Dendritic cell treated with granulocyte-macrophage colony-stimulating factor and Interleukin-4, amounts not matched to agents 40 ng/mL and 50 ng/mL, for 4 days (primary cell): ENCODE measurements at regions of chr9 and their contacts with region 1.

Region 1: GRCh38 chr9:88578121-88579054 is 43.4 kb downstream of the NXNL2 start:
- H3K4me3 Mint-ChIP-seq: peak overlapping the region; percentile 46
- H3K27ac Mint-ChIP-seq: no peak overlapping the region
- H3K4me1 Mint-ChIP-seq: peaks cover 18% of the 10 kb centered on the region
- H3K27me3 Mint-ChIP-seq: peaks cover 13% of the 10 kb centered on the region

Region 2: GRCh38 chr9:87950765-87951488 is 627.5 kb before region 1 on chr9:
- intact Hi-C with region 1: loop called (anchors 1 kb)
- H3K4me3 Mint-ChIP-seq: no peak overlapping the region
- H3K27ac Mint-ChIP-seq: no peak overlapping the region
- H3K4me1 Mint-ChIP-seq: no peaks in the 10 kb centered on the region
- H3K27me3 Mint-ChIP-seq: peaks cover 42% of the 10 kb centered on the region

Region 3: DNA sequence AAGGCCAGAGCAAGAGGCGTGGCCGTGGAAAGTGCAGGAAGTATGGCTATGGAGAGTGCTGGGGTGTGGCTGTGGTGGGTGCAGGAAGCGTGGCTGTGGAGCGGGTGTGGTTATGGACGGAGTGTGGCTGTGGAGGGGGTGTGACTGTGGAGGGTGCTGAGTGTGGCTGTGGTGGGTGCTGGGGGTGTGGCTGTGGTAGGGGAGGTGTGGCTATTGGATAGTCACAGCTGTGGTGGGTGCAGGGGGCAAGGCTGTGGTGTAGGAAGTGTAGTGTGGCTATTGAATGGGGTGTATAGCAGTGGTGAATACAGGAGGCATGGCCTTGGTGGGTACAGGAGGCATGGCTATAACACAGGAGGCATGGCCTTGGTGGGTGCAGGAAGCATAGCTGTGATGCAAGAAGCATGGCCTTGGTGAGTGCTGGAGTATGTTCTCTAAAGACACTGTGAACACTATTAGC is 399.3 kb before region 1 on chr9:
- intact Hi-C with region 1: loop called (anchors 5 kb)
- H3K4me3 Mint-ChIP-seq: no peak overlapping the region
- H3K27ac Mint-ChIP-seq: no peak overlapping the region
- H3K4me1 Mint-ChIP-seq: peaks cover 40% of the 10 kb centered on the region
- H3K27me3 Mint-ChIP-seq: peaks cover 10% of the 10 kb centered on the region

Region 4: GRCh38 chr9:88308831-88309560 is 269.4 kb before region 1 on chr9:
- intact Hi-C with region 1: loop called (anchors 2 kb)
- H3K4me3 Mint-ChIP-seq: no peak overlapping the region
- H3K27ac Mint-ChIP-seq: no peak overlapping the region
- H3K4me1 Mint-ChIP-seq: peaks cover 9% of the 10 kb centered on the region
- H3K27me3 Mint-ChIP-seq: no peaks in the 10 kb centered on the region

Region 5: DNA sequence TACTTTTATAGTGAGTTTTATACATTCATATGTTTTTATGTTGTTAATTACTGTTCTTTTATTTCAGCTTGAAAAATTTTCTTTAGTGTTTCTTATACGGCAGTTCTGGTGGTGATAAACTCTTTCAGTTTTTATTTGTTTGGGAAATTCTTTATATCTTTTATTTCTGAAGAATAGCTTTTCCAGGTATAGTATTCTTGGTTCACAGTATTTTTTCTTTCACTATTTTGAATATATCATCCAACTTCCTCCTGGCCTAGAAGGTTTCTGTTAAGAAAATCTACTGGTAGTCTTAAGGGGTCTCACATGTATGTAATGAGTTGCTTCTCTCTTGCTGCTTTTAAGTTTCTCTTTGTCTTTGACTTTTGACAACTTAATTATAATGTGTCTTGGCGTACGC is 36.0 kb after region 1 on chr9:
- intact Hi-C with region 1: no loop called
- H3K4me3 Mint-ChIP-seq: no peak overlapping the region
- H3K27ac Mint-ChIP-seq: no peak overlapping the region
- H3K4me1 Mint-ChIP-seq: no peaks in the 10 kb centered on the region
- H3K27me3 Mint-ChIP-seq: peaks cover 2% of the 10 kb centered on the region